Caco-2 (cell line): ENCODE measurements at regions of chr1 and their contacts with region 1.

Region 1: GRCh38 chr1:233033361-233033760 is 83.0 kb downstream of the NTPCR start:
- DNase-seq: no peak
- H3K4me3 ChIP-seq: no peak overlapping the region
- H3K4me3 Mint-ChIP-seq: no peak overlapping the region
- H3K27ac Mint-ChIP-seq: no peak overlapping the region
- H3K4me1 ChIP-seq: peaks cover 24% of the 10 kb centered on the region
- H3K4me1 Mint-ChIP-seq: peaks cover 10% of the 10 kb centered on the region
- H3K27me3 ChIP-seq: no peaks in the 10 kb centered on the region
- H3K27me3 Mint-ChIP-seq: no peaks in the 10 kb centered on the region
- CTCF ChIP-seq: no peak

Region 2: DNA sequence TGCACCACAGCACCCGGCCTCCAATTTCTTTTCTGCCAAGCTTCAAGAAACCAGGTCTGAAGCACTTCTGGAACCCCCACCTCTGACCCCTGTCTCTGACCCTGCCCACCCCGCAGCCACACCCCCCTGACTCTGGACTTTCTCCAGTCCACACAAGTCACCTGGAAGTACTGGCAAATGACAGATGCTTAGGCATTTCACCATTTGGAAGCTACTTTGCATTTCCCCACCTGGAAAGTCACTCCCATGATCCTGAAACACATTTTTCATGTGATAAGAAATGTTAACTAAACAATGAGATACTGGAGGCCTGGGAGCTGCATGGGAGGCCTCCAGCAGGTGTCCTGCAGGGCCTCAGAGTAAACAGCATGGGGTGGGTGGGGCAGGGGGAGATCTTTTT is 37.2 kb before region 1 on chr1:
- CTCF ChIA-PET with region 1: no interaction called
- POLR2A ChIA-PET with region 1: no interaction called
- intact Hi-C with region 1: loop called (anchors 1 kb)
- DNase-seq: peak; percentile 56 to 66
- H3K4me3 ChIP-seq: no peak overlapping the region
- H3K4me3 Mint-ChIP-seq: peak overlapping the region; percentile 9
- H3K27ac Mint-ChIP-seq: peak overlapping the region; percentile 25
- H3K4me1 ChIP-seq: peaks cover 16% of the 10 kb centered on the region
- H3K4me1 Mint-ChIP-seq: peaks cover 14% of the 10 kb centered on the region
- H3K27me3 ChIP-seq: no peaks in the 10 kb centered on the region
- H3K27me3 Mint-ChIP-seq: no peaks in the 10 kb centered on the region
- CTCF ChIP-seq: no peak

Region 3: GRCh38 chr1:233163696-233164095 is 130.3 kb after region 1 on chr1:
- CTCF ChIA-PET with region 1: no interaction called
- POLR2A ChIA-PET with region 1: no interaction called
- intact Hi-C with region 1: loop called (anchors 5 kb)
- DNase-seq: no peak
- H3K4me3 ChIP-seq: no peak overlapping the region
- H3K4me3 Mint-ChIP-seq: no peak overlapping the region
- H3K27ac Mint-ChIP-seq: peak overlapping the region; percentile 61
- H3K4me1 ChIP-seq: peaks cover 19% of the 10 kb centered on the region
- H3K4me1 Mint-ChIP-seq: peaks cover 8% of the 10 kb centered on the region
- H3K27me3 ChIP-seq: no peaks in the 10 kb centered on the region
- H3K27me3 Mint-ChIP-seq: no peaks in the 10 kb centered on the region
- CTCF ChIP-seq: no peak